ENCODE measurements at regions of chr6 and their contacts with region 1.

Region 1: GRCh38 chr6:1381481-1382330 is 7.7 kb upstream of the FOXF2 start:
- DNase-seq: peak in 6 of 10 donors; percentile 29 to 82 (median 52)
- H3K4me3 ChIP-seq: peak overlapping the region in 58 of 59 donors; percentile 11 to 69 (median 54)
- H3K27ac ChIP-seq: peak overlapping the region in 39 of 59 donors; percentile 4 to 86 (median 69)
- H3K27me3 ChIP-seq: peaks cover 14 to 100% (median 99%) of the 10 kb centered on the region in 45 donors
- CTCF ChIP-seq: peak; percentile 60 to 99 (median 90)

Region 2: GRCh38 chr6:593139-593906 is 788.4 kb before region 1 on chr6:
- intact Hi-C with region 1: loop called (anchors 1 to 5 kb)
- DNase-seq: peak in 4 of 10 donors; percentile 36 to 69 (median 48)
- H3K4me3 ChIP-seq: no peak overlapping the region
- H3K27ac ChIP-seq: no peak overlapping the region
- H3K27me3 ChIP-seq: no peaks in the 10 kb centered on the region
- CTCF ChIP-seq: peak; percentile 65 to 96 (median 83)

Region 3: DNA sequence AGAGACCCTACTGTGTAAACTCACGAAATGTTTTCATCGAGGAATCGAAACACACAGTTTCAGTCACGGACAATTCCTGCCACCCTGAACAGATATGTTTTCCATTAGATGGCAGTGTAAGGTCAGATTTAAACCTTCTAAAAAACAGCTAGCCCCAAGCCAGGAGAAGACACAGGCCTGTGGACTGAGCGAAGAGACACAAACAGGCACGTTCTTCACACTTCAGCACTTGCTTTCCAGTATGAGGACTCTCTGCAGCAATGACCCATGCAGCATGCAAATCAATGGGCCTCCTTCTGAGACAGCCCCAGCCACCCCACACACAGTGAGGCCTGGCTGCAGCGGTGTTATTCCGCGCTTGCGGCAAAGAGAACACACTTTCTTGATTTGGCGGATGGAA is 756.7 kb before region 1 on chr6:
- intact Hi-C with region 1: loop called in 1 of 2 experiments (anchors 10 kb)
- DNase-seq: no peak
- H3K4me3 ChIP-seq: peak overlapping the region in 4 of 59 donors; percentile 11 to 23 (median 16)
- H3K27ac ChIP-seq: peak overlapping the region in 2 of 59 donors; percentile 14 to 31
- H3K27me3 ChIP-seq: no peaks in the 10 kb centered on the region
- CTCF ChIP-seq: peak in 45 of 56 donors; percentile 17 to 70 (median 40)

Region 4: GRCh38 chr6:710601-711571 is 670.8 kb before region 1 on chr6:
- intact Hi-C with region 1: loop called in 1 of 2 experiments (anchors 10 kb)
- DNase-seq: peak; percentile 40 to 79 (median 56)
- H3K4me3 ChIP-seq: peak overlapping the region; percentile 47 to 86 (median 75)
- H3K27ac ChIP-seq: peak overlapping the region in 58 of 59 donors; percentile 35 to 97 (median 88)
- H3K27me3 ChIP-seq: no peaks in the 10 kb centered on the region
- CTCF ChIP-seq: peak in 2 of 56 donors; percentile 14 to 46

Region 5: DNA sequence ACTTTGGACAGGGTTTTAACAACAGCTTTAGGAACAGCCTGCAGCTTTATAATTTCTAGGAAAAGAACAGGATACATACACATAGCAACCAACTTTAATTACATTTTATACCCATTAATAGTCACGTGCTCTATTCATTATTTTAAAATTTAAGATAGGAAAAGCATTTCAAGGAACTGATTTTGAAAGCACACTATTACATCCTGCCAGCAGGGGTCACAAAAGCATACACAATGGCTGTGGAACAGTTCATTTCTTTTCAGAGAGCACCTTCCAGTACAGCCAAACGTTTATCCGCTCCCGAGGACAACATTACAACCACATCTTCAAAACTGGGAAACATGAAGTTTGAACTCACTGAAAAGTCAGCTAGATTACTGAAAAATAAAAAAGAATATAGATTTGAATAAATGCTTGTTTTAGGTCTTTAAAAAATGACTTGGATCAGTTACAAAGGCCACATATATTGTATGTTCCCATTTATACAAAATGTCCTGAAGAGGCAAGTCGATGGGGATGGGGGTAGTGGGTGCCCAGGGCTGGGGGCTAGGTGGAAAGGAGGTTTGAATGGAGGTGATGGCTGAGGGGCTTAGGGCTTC is 584.1 kb before region 1 on chr6:
- intact Hi-C with region 1: loop called (anchors 1 to 5 kb)
- DNase-seq: peak in 3 of 10 donors; percentile 27 to 59 (median 31)
- H3K4me3 ChIP-seq: no peak overlapping the region
- H3K27ac ChIP-seq: no peak overlapping the region
- H3K27me3 ChIP-seq: peaks cover 0 to 39% (median 0%) of the 10 kb centered on the region in 45 donors
- CTCF ChIP-seq: peak; percentile 54 to 95 (median 86)

Region 6: GRCh38 chr6:912871-913835 is 468.6 kb before region 1 on chr6:
- intact Hi-C with region 1: loop called in 1 of 2 experiments (anchors 5 kb)
- DNase-seq: peak in 1 of 10 donors; percentile 17
- H3K4me3 ChIP-seq: no peak overlapping the region
- H3K27ac ChIP-seq: no peak overlapping the region
- H3K27me3 ChIP-seq: peaks cover 0 to 50% (median 4%) of the 10 kb centered on the region in 45 donors
- CTCF ChIP-seq: peak in 50 of 56 donors; percentile 15 to 65 (median 48)

Region 7: DNA sequence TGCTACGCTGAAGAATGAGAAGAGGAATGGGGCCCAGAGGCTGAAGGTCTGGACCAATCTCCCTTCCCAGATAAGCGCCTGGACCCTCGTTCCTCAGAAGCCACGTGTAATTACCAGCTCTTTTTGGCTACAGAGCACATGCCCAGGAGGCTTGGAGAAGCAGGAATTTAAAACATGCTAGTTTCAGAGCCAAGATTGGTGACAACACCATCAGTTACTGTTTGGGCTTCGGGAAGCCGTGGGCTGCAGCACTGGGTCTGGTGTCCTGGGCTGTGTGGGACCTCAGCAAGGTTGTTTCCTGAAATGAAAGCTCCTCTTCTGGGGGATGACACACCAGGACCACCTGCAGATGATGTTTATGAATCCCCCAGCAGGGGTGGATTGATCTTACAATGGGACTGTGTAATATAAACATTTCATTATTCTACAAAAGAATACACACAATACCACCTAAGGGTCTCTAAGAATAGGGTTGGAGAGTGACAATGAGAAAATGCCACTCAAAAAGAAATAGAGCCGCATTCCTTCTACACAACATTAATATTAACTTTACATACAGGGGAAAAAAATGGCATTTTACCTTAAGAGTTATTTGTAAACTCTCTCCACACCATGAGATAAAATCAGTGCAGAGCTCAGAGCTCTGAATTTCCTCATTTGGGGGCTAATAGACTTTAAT is 277.6 kb before region 1 on chr6:
- intact Hi-C with region 1: loop called in 1 of 2 experiments (anchors 10 kb)
- DNase-seq: no peak
- H3K4me3 ChIP-seq: no peak overlapping the region
- H3K27ac ChIP-seq: no peak overlapping the region
- H3K27me3 ChIP-seq: peaks cover 0 to 14% (median 0%) of the 10 kb centered on the region in 45 donors
- CTCF ChIP-seq: no peak

Measured in dorsolateral prefrontal cortex (tissue), 120 donors.